CD4-positive, alpha-beta memory T cell (primary cell): ENCODE measurements at regions of chr3 and their contacts with region 1.

Region 1: GRCh38 chr3:46065294-46065721 is 38.0 kb upstream of the XCR1 start:
- DNase-seq: peak; percentile 88 to 99 (median 93)
- H3K4me3 ChIP-seq: no peak overlapping the region
- H3K4me3 Mint-ChIP-seq: peak overlapping the region; percentile 58 to 86 (median 78)
- H3K27ac ChIP-seq: peak overlapping the region; percentile 47
- H3K27ac Mint-ChIP-seq: peak overlapping the region; percentile 86 to 96 (median 94)
- H3K4me1 ChIP-seq: peaks cover 77% of the 10 kb centered on the region
- H3K4me1 Mint-ChIP-seq: peaks cover 52 to 88% (median 68%) of the 10 kb centered on the region in 4 donors
- H3K27me3 ChIP-seq: no peaks in the 10 kb centered on the region
- H3K27me3 Mint-ChIP-seq: no peaks in the 10 kb centered on the region

Region 2: GRCh38 chr3:45870099-45870498 is 195.2 kb before region 1 on chr3:
- CTCF ChIA-PET with region 1: no interaction called
- POLR2A ChIA-PET with region 1: interaction called, 4 read pairs
- intact Hi-C with region 1: loop called (anchors 5 kb)
- DNase-seq: peak; percentile 86 to 93 (median 91)
- H3K4me3 ChIP-seq: no peak overlapping the region
- H3K4me3 Mint-ChIP-seq: peak overlapping the region; percentile 4 to 73 (median 56)
- H3K27ac ChIP-seq: no peak overlapping the region
- H3K27ac Mint-ChIP-seq: peak overlapping the region; percentile 14 to 86 (median 72)
- H3K4me1 ChIP-seq: peaks cover 44% of the 10 kb centered on the region
- H3K4me1 Mint-ChIP-seq: peaks cover 33 to 59% (median 42%) of the 10 kb centered on the region in 4 donors
- H3K27me3 ChIP-seq: no peaks in the 10 kb centered on the region
- H3K27me3 Mint-ChIP-seq: peaks cover 10 to 12% of the 10 kb centered on the region in 2 donors

Region 3: DNA sequence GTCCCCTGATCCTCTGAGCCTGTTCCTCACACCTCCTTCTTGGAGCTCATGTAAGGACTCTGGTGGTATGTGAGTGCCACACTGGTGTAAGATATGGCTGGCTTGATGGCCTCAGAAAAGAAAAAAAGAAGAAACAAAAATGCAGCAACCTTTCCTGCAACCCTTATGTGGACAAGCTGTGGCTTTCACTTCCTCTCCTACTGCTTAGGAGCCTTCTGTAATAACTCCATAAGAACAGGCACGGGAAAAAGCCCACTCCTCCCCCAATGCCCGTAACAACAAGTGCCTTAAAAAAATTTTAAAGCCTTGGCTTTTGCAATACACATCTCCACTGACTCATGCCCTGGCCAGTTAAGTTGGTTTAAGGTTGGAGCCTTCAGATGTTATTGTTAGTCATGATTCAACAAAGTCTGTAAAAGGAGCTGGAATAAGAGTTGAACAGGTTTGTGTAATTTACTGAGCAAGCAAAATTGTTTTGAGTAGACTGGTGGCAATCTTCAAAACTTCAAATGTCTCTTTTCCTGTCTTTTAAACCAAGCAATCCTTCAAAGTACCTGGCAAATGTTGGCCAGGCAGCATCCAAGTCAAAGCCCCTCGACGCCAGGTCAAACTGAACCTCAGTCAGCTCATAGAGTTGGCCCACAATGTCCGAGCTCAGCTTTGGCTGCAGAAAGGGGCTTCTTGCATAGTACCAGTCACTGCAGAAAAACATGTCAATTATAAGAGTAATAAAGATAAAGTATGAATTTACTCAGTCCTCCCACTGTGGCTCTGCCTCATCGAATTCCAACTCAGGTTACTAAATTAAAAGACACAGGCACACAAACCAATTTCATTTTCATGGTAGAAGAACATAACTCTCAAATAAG is 92.5 kb before region 1 on chr3:
- CTCF ChIA-PET with region 1: interaction called, 4 read pairs
- POLR2A ChIA-PET with region 1: interaction called, 80 read pairs
- intact Hi-C with region 1: loop called (anchors 2 kb)
- DNase-seq: no peak
- H3K4me3 ChIP-seq: no peak overlapping the region
- H3K4me3 Mint-ChIP-seq: peak overlapping the region in 4 of 8 donors; percentile 20 to 54 (median 28)
- H3K27ac ChIP-seq: no peak overlapping the region
- H3K27ac Mint-ChIP-seq: peak overlapping the region; percentile 63 to 90 (median 75)
- H3K4me1 ChIP-seq: peaks cover 75% of the 10 kb centered on the region
- H3K4me1 Mint-ChIP-seq: peaks cover 40 to 91% (median 66%) of the 10 kb centered on the region in 4 donors
- H3K27me3 ChIP-seq: no peaks in the 10 kb centered on the region
- H3K27me3 Mint-ChIP-seq: no peaks in the 10 kb centered on the region

Region 4: GRCh38 chr3:46049116-46049515 is 16.2 kb before region 1 on chr3:
- CTCF ChIA-PET with region 1: interaction called, 5 read pairs
- POLR2A ChIA-PET with region 1: interaction called, 19 read pairs
- intact Hi-C with region 1: no loop called
- DNase-seq: no peak
- H3K4me3 ChIP-seq: no peak overlapping the region
- H3K4me3 Mint-ChIP-seq: no peak overlapping the region
- H3K27ac ChIP-seq: no peak overlapping the region
- H3K27ac Mint-ChIP-seq: peak overlapping the region in 1 of 7 donors; percentile 47
- H3K4me1 ChIP-seq: peaks cover 23% of the 10 kb centered on the region
- H3K4me1 Mint-ChIP-seq: peaks cover 23 to 48% (median 30%) of the 10 kb centered on the region in 4 donors
- H3K27me3 ChIP-seq: no peaks in the 10 kb centered on the region
- H3K27me3 Mint-ChIP-seq: no peaks in the 10 kb centered on the region

Region 5: GRCh38 chr3:46107682-46108081 is 42.4 kb after region 1 on chr3:
- CTCF ChIA-PET with region 1: no interaction called
- POLR2A ChIA-PET with region 1: no interaction called
- intact Hi-C with region 1: no loop called
- DNase-seq: peak in 1 of 5 donors; percentile 40
- H3K4me3 ChIP-seq: no peak overlapping the region
- H3K4me3 Mint-ChIP-seq: peak overlapping the region in 3 of 8 donors; percentile 39 to 46 (median 41)
- H3K27ac ChIP-seq: no peak overlapping the region
- H3K27ac Mint-ChIP-seq: peak overlapping the region in 4 of 7 donors; percentile 62 to 88 (median 68)
- H3K4me1 ChIP-seq: peaks cover 28% of the 10 kb centered on the region
- H3K4me1 Mint-ChIP-seq: peaks cover 24 to 74% (median 35%) of the 10 kb centered on the region in 4 donors
- H3K27me3 ChIP-seq: no peaks in the 10 kb centered on the region
- H3K27me3 Mint-ChIP-seq: no peaks in the 10 kb centered on the region